ENCODE measurements at regions of chr7 and their contacts with region 1.

Region 1: DNA sequence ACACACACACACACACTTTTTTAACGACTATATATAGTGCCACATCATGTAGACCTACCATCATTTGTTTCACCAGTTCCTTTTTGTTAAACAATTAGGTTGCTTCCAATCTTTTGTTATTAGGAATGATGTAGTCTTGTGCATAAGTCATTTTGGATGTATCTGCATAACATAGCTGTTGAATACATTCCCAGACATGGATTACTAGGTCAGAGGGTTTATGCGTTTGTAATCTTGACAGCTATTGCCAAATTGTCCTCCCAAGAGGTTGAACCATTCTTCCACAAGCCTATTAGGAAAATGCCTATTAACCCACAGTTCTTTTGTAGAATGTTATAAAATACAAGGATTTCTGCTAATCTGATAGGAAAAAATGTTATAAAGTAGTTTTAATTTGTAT is 87.3 kb downstream of the PALS2 start:
- DNase-seq: no peak
- ATAC-seq: no peak
- H3K4me3 Mint-ChIP-seq: no peak overlapping the region
- H3K27ac Mint-ChIP-seq: no peak overlapping the region
- H3K4me1 Mint-ChIP-seq: peaks cover 4% of the 10 kb centered on the region
- H3K27me3 Mint-ChIP-seq: no peaks in the 10 kb centered on the region
- CTCF ChIP-seq: no peak

Region 2: GRCh38 chr7:24587848-24588247 is 72.7 kb before region 1 on chr7:
- CTCF ChIA-PET with region 1: no interaction called
- POLR2A ChIA-PET with region 1: no interaction called
- intact Hi-C with region 1: loop called (anchors 5 kb)
- DNase-seq: peak; percentile 67
- ATAC-seq: peak; percentile 87
- H3K4me3 Mint-ChIP-seq: no peak overlapping the region
- H3K27ac Mint-ChIP-seq: no peak overlapping the region
- H3K4me1 Mint-ChIP-seq: peaks cover 27% of the 10 kb centered on the region
- H3K27me3 Mint-ChIP-seq: no peaks in the 10 kb centered on the region
- CTCF ChIP-seq: peak; percentile 71